MCF 10A (cell line): ENCODE measurements at regions of chr7 and their contacts with region 1.

Region 1: GRCh38 chr7:44885394-44886317 is at the start of gene PURB:
- DNase-seq: peak; percentile 96
- H3K4me3 Mint-ChIP-seq: peak within 1 kb of the TSS; percentile 93
- H3K27ac Mint-ChIP-seq: peak within 1 kb of the TSS; percentile 99
- H3K4me1 Mint-ChIP-seq: peaks cover 25% of the 10 kb centered on the region
- H3K27me3 Mint-ChIP-seq: no peaks in the 10 kb centered on the region
- CTCF ChIP-seq: no peak
- total RNA-seq, gene PURB: 21.3 and 27.9 TPM in 2 replicates

Region 2: DNA sequence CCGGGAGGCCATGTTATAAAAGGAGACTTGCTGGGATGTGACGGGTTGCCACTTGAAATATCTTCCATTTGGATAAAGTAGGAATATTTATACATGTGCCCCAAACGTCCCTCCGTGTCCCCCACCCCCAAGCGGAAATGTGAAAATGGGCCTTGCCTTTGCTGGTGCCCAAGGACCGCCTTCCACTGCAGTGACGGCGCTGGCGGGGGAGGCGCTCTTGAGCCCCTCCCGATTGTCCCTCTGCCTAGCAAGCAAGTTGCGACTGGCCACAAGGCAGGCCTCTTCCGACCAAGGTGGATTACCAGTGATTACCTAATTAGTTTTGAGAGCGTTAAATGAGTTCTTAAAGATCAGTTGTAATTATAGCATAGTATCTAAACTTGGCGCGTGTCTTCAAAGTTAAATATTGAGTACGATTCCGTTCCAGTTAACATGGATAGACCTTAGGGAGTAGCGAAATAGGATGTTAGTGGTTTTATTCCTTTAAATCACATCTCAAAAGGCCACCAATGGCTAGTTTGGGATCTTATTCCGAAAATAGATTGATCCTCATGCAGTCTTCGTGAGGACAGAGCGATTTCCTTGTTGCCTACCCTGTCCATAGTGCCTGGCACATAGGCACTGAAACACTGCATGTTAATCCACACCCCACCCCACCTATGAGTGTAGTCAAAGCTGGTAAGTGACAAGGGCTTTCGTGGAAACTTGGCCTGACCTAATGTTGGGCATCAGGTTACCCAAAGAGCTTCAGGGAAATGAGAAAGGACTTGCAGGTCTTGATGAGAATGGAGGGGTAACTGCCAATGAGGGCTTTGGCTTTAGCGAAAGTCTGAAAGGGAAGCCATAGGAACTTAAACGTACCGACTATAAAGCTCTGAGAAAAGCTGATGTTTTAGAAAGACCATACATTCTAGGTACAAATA is 88.1 kb before region 1 on chr7:
- CTCF ChIA-PET with region 1: interaction called, 5 read pairs
- POLR2A ChIA-PET with region 1: interaction called, 22 read pairs
- intact Hi-C with region 1: no loop called
- DNase-seq: peak; percentile 90
- H3K4me3 Mint-ChIP-seq: peak overlapping the region; percentile 87
- H3K27ac Mint-ChIP-seq: peak overlapping the region; percentile 98
- H3K4me1 Mint-ChIP-seq: peaks cover 6% of the 10 kb centered on the region
- H3K27me3 Mint-ChIP-seq: no peaks in the 10 kb centered on the region
- CTCF ChIP-seq: peak; percentile 42

Region 3: GRCh38 chr7:44867073-44867995 is 18.3 kb before region 1 on chr7:
- CTCF ChIA-PET with region 1: interaction called, 11 read pairs
- POLR2A ChIA-PET with region 1: interaction called, 31 read pairs
- intact Hi-C with region 1: no loop called
- DNase-seq: peak; percentile 76
- H3K4me3 Mint-ChIP-seq: no peak overlapping the region
- H3K27ac Mint-ChIP-seq: peak overlapping the region; percentile 73
- H3K4me1 Mint-ChIP-seq: peaks cover 6% of the 10 kb centered on the region
- H3K27me3 Mint-ChIP-seq: no peaks in the 10 kb centered on the region
- CTCF ChIP-seq: no peak

Region 4: DNA sequence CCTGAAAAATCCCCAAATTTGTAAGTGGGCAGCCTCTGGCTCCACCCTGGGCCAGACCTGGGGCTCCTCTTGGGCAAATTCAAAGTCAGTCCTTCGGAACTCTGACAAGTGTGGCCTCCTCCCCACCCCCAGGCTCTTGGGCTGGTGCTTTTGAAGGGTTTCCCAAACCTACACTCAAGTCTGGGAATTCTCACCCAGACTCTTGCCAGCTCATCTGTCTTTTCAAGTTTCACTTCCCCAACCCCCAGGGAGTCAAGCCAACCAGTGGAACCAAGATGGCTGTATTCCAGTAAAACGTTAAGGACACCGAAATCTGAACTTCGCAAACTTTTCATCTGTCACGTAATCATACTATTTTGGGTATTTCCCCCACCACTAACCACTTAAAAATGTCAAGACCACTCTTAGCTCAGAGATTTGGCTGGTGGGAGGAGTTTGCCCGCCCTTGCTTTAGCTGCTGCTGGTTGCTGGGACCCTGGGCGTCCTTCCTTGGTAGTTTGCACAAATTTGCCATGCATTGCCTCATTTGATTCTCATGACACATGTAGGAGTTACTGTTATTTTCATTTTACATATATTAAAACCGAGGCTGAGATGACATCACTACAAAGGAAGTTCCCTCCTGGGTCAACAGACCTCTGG is 94.9 kb after region 1 on chr7:
- CTCF ChIA-PET with region 1: interaction called, 4 read pairs
- POLR2A ChIA-PET with region 1: interaction called, 79 read pairs
- intact Hi-C with region 1: loop called (anchors 10 kb)
- DNase-seq: peak; percentile 90
- H3K4me3 Mint-ChIP-seq: no peak overlapping the region
- H3K27ac Mint-ChIP-seq: peak overlapping the region; percentile 59
- H3K4me1 Mint-ChIP-seq: peaks cover 45% of the 10 kb centered on the region
- H3K27me3 Mint-ChIP-seq: no peaks in the 10 kb centered on the region
- CTCF ChIP-seq: no peak

Region 5: DNA sequence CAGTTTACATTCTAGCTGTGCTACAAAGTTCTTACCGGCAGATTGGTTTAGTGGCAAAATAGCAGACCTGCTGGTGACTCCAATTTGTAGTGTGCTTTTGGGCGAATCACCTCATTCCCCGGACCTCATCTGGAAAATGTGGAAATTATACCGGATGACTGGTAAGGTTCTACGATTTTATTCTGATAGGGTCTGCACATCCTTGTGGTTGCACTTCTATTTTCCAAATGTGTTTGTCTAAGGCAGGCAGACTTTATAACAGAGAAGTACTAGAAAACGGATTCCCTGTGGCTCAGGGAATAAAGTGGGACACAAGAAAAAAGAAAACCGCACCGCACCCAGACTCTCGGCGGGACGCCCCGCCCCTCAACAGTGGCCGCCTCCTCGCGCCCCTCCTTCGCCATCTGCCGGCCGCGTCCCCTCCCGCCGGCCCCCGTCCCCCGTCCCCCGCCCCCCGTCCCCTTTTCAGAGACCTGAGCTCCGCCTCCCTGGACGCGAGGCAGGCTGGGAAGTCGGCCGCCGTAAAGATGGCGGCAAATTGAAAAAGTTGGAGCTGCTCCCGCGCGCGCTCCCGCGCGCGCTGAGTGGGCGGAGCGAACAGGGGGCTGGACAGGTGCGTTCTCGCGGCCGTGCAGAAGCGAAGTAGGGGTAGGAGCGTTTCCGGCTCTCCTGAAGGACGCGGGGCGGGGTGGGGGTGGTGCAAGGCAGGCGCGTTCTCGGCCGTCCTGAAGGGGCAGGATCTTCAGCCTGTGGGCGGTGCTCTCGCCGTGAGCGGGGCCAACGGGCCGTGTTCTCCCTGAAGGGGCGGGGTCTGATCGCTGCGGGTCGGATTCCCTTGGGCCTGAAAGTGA is 113.8 kb after region 1 on chr7:
- CTCF ChIA-PET with region 1: interaction called, 4 read pairs
- POLR2A ChIA-PET with region 1: interaction called, 153 read pairs
- intact Hi-C with region 1: no loop called
- DNase-seq: peak; percentile 99
- H3K4me3 Mint-ChIP-seq: peak overlapping the region; percentile 75
- H3K27ac Mint-ChIP-seq: peak overlapping the region; percentile 16
- H3K4me1 Mint-ChIP-seq: peaks cover 29% of the 10 kb centered on the region
- H3K27me3 Mint-ChIP-seq: no peaks in the 10 kb centered on the region
- CTCF ChIP-seq: no peak

Region 6: DNA sequence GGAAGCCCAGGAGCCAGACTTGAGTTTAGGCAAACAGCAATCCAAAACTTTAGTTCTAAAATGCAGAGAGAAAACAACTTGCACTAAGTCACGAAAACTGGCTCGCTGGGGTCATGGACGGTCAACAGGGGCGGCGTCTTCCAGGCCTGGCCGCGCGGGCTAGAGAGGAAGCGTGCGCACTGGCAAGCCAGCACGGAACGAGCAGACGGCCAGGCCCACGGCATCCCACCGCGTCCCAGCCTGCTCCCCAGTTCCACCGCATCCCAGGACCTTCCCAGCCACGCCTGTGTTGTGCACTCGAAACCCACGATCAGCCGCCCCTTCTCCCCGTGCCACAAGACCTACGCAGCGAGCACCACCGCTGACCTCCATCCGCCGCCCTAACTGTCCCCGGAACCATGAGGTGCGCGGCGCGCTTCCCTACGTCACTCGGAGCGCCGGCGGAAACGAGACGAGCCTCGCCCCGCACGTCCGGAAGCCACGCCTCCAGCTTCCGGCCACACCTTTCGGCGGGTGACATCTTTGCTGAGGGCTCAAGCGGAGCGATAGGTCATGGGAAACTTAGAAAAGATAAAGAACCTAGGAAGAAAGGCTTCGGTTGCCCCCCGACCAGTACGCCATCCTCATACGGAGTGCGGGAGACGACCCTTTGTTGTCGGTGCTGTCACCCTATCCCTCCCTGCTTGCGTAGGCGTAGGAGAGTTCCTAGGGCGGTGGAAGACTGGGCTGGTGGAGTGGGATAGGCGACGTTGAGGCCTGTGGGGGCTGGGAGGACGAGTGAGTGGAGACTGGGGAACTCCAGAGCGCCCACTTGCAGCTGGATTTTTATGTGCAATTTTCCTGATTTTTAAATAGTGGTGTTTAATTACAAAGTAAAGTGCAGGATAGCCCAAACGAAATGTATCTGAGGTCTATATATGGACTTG is 225.9 kb after region 1 on chr7 and contains the start of gene TBRG4:
- CTCF ChIA-PET with region 1: no interaction called
- POLR2A ChIA-PET with region 1: interaction called, 29 read pairs
- intact Hi-C with region 1: no loop called
- DNase-seq: peak; percentile 94
- H3K4me3 Mint-ChIP-seq: peak within 1 kb of the TSS; percentile 91
- H3K27ac Mint-ChIP-seq: peak within 1 kb of the TSS; percentile 97
- H3K4me1 Mint-ChIP-seq: peaks cover 19% of the 10 kb centered on the region
- H3K27me3 Mint-ChIP-seq: no peaks in the 10 kb centered on the region
- CTCF ChIP-seq: no peak
- total RNA-seq, gene TBRG4: 77.2 and 85.7 TPM in 2 replicates

Region 7: DNA sequence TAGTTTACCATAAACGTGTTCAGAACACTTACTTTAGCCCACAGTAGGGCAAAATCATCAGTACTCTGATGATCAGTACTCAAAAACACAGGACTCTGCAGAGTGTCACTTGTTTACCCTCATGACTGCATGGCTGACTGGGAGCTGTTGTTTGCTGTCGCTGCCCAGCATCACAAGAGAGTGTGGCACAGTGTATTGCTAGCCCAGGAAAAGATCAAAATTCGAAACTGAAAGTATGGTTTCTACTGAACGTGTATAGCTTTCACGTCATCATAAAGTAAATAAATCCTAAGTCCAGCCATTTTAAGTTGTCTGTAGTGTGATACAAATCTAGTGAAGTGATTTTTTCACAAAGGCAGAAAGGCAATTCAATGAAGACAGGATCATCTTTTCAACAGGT is 456.6 kb after region 1 on chr7:
- CTCF ChIA-PET with region 1: no interaction called
- POLR2A ChIA-PET with region 1: no interaction called
- intact Hi-C with region 1: no loop called
- DNase-seq: peak; percentile 4
- H3K4me3 Mint-ChIP-seq: peak overlapping the region; percentile 16
- H3K27ac Mint-ChIP-seq: no peak overlapping the region
- H3K4me1 Mint-ChIP-seq: no peaks in the 10 kb centered on the region
- H3K27me3 Mint-ChIP-seq: peaks cover 94% of the 10 kb centered on the region
- CTCF ChIP-seq: no peak